ENCODE measurements at regions of chr1 and their contacts with region 1.

Region 1: GRCh38 chr1:8482979-8483391 is 165.1 kb downstream of the SLC45A1 start:
- DNase-seq: no peak
- ATAC-seq: no peak
- H3K4me3 Mint-ChIP-seq: no peak overlapping the region
- H3K27ac Mint-ChIP-seq: no peak overlapping the region
- H3K4me1 Mint-ChIP-seq: peaks cover 38% of the 10 kb centered on the region
- H3K27me3 Mint-ChIP-seq: no peaks in the 10 kb centered on the region
- CTCF ChIP-seq: no peak

Region 2: DNA sequence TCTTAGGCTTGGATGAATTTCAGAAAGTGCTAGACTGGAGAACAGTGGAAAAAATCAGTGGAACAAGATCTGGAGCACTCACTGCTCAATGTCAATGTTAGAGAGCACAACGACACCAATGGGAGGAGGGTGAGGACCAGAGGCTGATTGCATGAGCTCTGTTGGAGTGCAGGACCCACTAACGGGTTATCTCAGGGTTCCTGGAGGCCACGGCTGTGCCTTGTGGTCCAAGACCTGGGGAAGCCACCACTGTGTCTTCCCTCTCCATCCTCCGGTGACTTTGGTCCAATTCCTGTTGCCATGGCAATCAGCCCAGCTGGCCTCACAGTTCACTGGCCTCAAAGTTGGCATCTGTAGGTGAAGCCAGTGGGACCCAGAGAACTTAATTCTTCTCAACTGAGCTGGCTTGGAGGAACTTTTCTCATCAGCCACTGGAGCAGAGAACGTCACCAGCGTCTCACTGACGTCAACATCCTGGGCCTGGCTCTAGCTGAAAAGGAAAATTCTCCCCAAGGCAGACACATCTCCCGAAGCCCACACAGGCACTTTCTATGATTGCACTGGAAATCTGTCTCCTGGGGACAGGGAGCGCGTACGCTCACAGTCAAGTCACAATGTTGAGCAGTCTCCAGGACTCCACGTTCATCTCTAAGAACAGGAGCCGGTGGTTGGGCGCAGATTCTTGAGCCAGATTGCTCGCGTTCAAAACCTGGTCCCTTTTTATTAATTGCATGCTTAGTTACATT is 667.8 kb after region 1 on chr1:
- CTCF ChIA-PET with region 1: no interaction called
- POLR2A ChIA-PET with region 1: interaction called, 12 read pairs
- DNase-seq: no peak
- ATAC-seq: no peak
- H3K4me3 Mint-ChIP-seq: no peak overlapping the region
- H3K27ac Mint-ChIP-seq: no peak overlapping the region
- H3K4me1 Mint-ChIP-seq: peaks cover 7% of the 10 kb centered on the region; the same call in 1 of the 2 replicates
- H3K27me3 Mint-ChIP-seq: no peaks in the 10 kb centered on the region
- CTCF ChIP-seq: no peak